RWPE1 (cell line): ENCODE measurements at regions of chr20 and their contacts with region 1.

Region 1: DNA sequence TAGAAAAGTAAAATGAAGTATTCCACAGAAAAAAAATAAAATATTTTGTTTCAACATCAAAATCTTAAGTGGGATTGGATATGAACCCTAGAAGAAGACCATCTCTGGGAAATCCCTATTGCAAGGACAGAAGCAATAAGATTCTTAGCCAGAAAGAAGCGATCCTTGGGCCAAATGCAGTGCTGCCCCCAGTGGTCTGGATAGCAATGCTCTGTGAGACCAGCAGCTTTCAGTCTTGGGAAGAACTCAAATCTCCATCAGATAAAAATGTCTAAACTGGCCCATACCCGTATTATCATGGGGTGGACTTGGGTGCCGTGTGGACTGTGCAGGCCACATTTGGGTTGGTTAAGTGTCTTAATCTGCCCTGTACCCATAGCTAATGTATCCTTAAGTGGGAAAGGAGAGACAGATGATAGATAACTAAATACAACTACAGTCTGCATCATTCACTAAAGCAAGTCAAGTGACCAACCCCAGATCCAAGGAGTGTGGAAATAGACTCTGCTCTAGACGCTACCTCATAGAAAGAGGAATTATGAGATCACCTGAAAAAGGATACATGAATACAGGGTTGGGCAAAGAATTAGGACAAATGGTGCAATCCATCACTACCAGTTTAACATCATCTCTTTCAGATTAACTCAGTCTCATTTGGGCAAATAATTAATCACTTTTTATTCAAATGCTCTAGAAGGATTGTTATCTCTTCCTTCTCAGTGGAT is 38.9 kb upstream of the SNAP25 start:
- DNase-seq: no peak
- H3K27ac ChIP-seq: no peak overlapping the region
- CTCF ChIP-seq: no peak; the same call in 1 of the 2 replicates

Region 2: DNA sequence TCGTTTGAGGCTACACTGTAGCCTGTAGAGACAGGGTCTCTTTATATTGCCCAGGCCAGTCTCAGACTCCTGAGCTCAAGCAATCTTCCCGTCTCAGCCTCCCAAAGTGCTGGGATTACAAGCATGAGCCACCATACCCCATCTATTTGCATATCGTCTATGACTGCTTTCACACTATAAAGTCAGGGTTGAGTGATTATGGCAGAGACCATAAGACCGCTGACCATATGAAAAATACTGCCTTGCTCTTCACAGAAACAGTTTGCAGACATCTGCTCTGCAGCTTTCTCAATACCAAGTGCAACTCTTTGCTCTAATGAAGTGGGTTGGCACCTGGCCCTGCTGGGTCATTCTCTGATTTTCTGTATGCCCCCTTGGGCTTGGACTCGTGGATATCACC is 261.4 kb before region 1 on chr20:
- CTCF ChIA-PET with region 1: interaction called, 10 read pairs
- POLR2A ChIA-PET with region 1: no interaction called
- DNase-seq: no peak
- H3K27ac ChIP-seq: no peak overlapping the region
- CTCF ChIP-seq: no peak

Region 3: DNA sequence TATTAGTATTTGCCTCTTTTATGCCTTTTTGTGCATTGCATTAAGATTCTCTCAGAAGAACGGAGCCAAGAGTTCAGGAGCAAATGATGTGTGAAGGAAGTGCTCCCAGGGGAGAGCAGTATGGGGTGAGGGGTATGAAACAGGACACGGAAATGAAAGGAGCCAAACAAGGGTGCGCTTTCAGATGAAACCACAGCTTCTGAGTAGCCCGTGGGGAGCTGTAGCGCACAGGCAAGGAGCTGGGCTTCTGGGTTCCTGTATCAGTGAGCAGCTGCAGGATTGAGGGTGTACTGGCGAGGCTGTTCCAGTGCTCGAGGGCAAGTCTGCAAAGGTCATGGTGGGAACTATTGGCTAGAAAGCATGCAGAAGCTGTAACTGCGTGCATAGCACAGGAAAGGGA is 119.5 kb before region 1 on chr20:
- CTCF ChIA-PET with region 1: no interaction called
- POLR2A ChIA-PET with region 1: no interaction called
- DNase-seq: no peak
- H3K27ac ChIP-seq: no peak overlapping the region
- CTCF ChIP-seq: no peak

Region 4: GRCh38 chr20:10201321-10201870 is 21.7 kb after region 1 on chr20:
- CTCF ChIA-PET with region 1: no interaction called
- POLR2A ChIA-PET with region 1: no interaction called
- DNase-seq: no peak
- H3K27ac ChIP-seq: no peak overlapping the region
- CTCF ChIP-seq: no peak

Region 5: GRCh38 chr20:10216146-10216791 is 36.5 kb after region 1 on chr20:
- CTCF ChIA-PET with region 1: no interaction called
- POLR2A ChIA-PET with region 1: no interaction called
- DNase-seq: no peak
- H3K27ac ChIP-seq: no peak overlapping the region
- CTCF ChIP-seq: no peak